ENCODE measurements at regions of chr7 and their contacts with region 1.

Region 1: GRCh38 chr7:66628361-66629140 is at the start of gene KCTD7:
- DNase-seq: peak; percentile 97
- H3K4me3 ChIP-seq: peak within 1 kb of the TSS; percentile 84 to 92
- H3K27ac ChIP-seq: peak within 1 kb of the TSS; percentile 86 to 96
- H3K4me1 ChIP-seq: no peaks in the 10 kb centered on the region
- H3K27me3 ChIP-seq: no peaks in the 10 kb centered on the region
- CTCF ChIP-seq: peak in 2 of 4 experiments; percentile 13 to 29
- POLR2A ChIP-seq: peak; percentile 96
- total RNA-seq, gene KCTD7: 17.7 to 61.0 TPM

Region 2: DNA sequence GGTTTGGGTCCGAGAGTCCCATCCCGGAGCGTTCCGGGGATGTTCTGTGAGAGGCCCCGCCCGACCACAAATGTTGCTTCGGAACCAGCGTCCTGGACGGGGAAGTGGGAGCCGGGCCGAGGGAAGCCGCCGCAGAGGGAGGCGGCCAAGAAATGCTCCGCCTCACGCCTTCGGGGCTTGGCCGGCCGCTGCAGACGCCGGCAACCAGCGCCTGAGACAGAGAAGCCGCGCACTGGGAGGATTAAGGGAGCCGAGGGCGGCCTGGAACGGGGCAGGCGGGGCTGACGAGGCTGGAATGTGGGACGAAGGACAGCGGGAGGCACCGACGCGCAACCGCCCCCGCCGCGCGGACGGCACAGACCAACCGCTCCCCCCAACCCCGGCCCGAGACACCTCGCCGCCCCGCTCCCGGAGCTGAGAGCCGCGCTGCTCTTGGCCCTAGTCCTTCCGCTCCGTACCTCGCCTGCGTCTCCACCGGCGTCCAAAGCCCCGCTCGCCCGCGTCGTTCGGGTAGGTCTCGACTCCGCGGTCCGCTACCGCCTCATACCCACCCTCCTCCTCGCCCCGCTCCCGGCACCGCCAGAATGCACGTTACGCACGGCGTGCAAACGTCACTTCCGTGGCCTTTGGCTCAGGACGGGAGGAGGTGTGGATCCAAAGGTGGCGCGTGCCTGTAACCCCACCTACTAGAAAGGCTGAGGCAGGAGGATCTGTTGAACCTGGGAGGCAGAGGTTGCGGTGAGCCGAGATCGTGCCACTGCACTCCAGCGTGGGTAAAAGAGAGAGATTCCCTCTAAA is 36.6 kb before region 1 on chr7:
- intact Hi-C with region 1: loop called (anchors 2 kb)
- DNase-seq: peak; percentile 92
- H3K4me3 ChIP-seq: peak overlapping the region; percentile 94 to 96
- H3K27ac ChIP-seq: peak overlapping the region; percentile 94 to 97
- H3K4me1 ChIP-seq: no peaks in the 10 kb centered on the region
- H3K27me3 ChIP-seq: no peaks in the 10 kb centered on the region
- CTCF ChIP-seq: no peak
- POLR2A ChIP-seq: peak; percentile 88

Region 3: DNA sequence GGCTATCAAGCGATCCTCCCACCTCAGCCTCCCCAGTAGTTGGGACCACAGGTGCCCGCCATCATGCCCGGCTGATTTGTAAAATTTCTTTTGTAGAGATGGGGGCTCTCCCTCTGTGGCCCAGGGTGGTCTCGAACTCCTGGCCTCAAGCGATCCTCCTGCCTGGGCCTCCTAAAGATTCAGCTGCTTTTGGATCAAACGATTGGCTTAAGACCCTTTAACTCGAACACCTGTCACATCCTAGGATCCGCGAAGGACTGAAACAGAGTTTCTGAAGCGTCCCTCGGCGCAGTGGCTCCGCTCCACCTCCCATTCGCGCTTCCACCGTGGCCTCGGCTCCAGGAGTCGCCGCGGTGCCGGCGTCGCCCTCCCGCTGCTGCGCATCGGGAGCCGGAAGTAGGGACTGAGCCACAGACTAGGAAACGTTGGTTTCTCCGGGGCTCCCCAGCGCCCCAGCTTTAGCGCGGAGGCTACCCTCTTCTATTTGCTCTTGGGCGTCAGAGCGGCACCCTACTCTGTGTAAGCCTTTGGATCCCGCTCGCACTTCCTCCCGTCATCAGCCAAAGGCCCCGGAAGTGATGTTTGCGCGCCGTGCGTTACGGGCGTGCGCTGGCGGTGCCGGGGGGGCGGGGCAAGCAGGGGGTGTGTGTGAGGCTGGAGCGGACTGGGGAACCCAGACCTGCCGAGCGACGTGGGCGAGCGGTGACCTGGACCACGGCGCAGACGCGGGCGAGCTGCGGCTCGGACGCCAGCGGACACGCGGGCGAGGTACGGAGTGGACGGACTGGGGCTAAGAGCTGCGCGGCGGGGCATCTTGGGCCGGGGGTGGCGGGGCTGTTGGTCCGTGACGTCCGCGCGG is 53.2 kb after region 1 on chr7:
- intact Hi-C with region 1: loop called (anchors 2 kb)
- DNase-seq: peak; percentile 96
- H3K4me3 ChIP-seq: peak overlapping the region; percentile 83 to 94
- H3K27ac ChIP-seq: peak overlapping the region; percentile 98 to 99
- H3K4me1 ChIP-seq: no peaks in the 10 kb centered on the region
- H3K27me3 ChIP-seq: no peaks in the 10 kb centered on the region
- CTCF ChIP-seq: peak in 1 of 4 experiments; percentile 18
- POLR2A ChIP-seq: peak; percentile 97

Measured in prostate gland (tissue), 2 donors.